ENCODE measurements at regions of chr6 and their contacts with region 1.

Region 1: GRCh38 chr6:133973109-133973971 is 20.3 kb downstream of the TBPL1 start:
- DNase-seq: no peak
- ATAC-seq: peak in 1 of 4 donors; percentile 41
- H3K4me3 ChIP-seq: no peak overlapping the region
- H3K27ac ChIP-seq: no peak overlapping the region
- H3K4me1 ChIP-seq: peaks cover 0 to 28% (median 18%) of the 10 kb centered on the region in 12 donors
- H3K27me3 ChIP-seq: no peaks in the 10 kb centered on the region
- CTCF ChIP-seq: peak; percentile 61 to 84 (median 74)
- POLR2A ChIP-seq: no peak

Region 2: GRCh38 chr6:134063966-134064445 is 90.7 kb after region 1 on chr6:
- intact Hi-C with region 1: loop called (anchors 1 to 5 kb)
- DNase-seq: peak in 4 of 5 donors; percentile 44 to 54 (median 48)
- ATAC-seq: peak; percentile 72 to 91 (median 86)
- H3K4me3 ChIP-seq: no peak overlapping the region
- H3K27ac ChIP-seq: peak overlapping the region in 1 of 12 donors; percentile 63
- H3K4me1 ChIP-seq: peaks cover 0 to 28% (median 5%) of the 10 kb centered on the region in 12 donors
- H3K27me3 ChIP-seq: no peaks in the 10 kb centered on the region
- CTCF ChIP-seq: peak; percentile 58 to 91 (median 72)
- POLR2A ChIP-seq: no peak

Region 3: GRCh38 chr6:134491477-134491876 is 518.1 kb after region 1 on chr6:
- intact Hi-C with region 1: no loop called
- DNase-seq: no peak
- ATAC-seq: no peak
- H3K4me3 ChIP-seq: no peak overlapping the region
- H3K27ac ChIP-seq: no peak overlapping the region
- H3K4me1 ChIP-seq: peaks cover 0 to 6% (median 0%) of the 10 kb centered on the region in 12 donors
- H3K27me3 ChIP-seq: no peaks in the 10 kb centered on the region
- CTCF ChIP-seq: no peak
- POLR2A ChIP-seq: no peak

Measured in heart left ventricle (tissue), 16 donors.